PC-3 (cell line): ENCODE measurements at regions of chr2 and their contacts with region 1.

Region 1: DNA sequence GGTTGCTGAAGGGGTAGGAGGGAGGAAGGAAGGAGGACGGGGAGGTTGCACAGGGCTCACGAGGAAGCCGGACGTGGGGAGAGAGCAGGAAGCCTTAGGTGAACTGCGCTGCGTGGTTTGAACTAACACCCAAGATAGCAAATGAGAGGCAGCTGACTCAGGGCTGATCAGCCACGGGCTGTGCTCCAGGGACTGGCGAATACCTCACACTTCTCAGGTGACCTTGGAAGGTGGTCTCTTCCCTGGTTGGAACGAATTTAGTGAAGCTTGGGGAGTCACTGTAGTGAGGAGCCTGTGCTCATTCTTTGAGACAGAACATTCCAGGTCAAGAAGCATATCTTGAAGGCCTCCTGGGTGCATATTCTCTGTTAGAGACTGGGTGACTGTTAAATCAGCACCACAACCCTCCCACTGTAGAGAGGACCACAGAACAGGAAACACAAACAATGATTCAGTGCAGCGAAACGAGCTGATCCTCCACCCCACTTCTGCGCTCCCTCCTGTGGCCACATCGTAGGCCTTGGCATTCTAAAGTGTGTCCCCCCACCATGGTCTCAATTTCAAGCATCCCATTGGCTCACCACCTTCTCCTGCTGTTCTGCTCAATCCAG is 33.8 kb downstream of the TOGARAM2 start:
- DNase-seq: peak; percentile 72
- ATAC-seq: peak; percentile 89
- H3K4me3 ChIP-seq: no peak overlapping the region
- H3K27ac ChIP-seq: peak overlapping the region; percentile 23; the same call in 1 of the 2 replicates
- H3K4me1 ChIP-seq: peaks cover 15% of the 10 kb centered on the region
- H3K27me3 ChIP-seq: no peaks in the 10 kb centered on the region
- CTCF ChIP-seq: peak; percentile 46

Region 2: DNA sequence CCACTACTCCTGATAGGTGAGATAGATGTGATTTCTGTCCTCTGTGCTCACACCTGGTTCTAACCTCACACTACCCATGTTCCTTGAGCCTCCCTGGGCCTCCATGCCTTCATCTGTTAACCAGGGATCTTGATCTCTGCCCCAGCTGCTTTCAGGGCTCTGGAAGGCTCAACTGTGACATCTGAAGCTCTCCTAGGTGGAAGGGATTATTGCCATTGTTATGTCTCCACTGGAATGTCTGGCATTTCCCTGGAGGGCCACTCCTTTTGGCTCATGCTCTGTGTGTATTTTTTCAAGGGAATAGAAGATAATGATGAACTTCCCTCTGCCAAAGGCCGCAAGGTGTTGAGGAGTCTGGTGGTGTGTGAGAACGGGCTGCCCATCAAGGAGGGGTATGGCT is 18.3 kb after region 1 on chr2:
- CTCF ChIA-PET with region 1: no interaction called
- POLR2A ChIA-PET with region 1: interaction called, 17 read pairs
- intact Hi-C with region 1: no loop called
- DNase-seq: peak; percentile 72
- ATAC-seq: peak; percentile 96
- H3K4me3 ChIP-seq: no peak overlapping the region
- H3K27ac ChIP-seq: no peak overlapping the region
- H3K4me1 ChIP-seq: peaks cover 10% of the 10 kb centered on the region; the same call in 1 of the 2 replicates
- H3K27me3 ChIP-seq: no peaks in the 10 kb centered on the region
- CTCF ChIP-seq: no peak

Region 3: DNA sequence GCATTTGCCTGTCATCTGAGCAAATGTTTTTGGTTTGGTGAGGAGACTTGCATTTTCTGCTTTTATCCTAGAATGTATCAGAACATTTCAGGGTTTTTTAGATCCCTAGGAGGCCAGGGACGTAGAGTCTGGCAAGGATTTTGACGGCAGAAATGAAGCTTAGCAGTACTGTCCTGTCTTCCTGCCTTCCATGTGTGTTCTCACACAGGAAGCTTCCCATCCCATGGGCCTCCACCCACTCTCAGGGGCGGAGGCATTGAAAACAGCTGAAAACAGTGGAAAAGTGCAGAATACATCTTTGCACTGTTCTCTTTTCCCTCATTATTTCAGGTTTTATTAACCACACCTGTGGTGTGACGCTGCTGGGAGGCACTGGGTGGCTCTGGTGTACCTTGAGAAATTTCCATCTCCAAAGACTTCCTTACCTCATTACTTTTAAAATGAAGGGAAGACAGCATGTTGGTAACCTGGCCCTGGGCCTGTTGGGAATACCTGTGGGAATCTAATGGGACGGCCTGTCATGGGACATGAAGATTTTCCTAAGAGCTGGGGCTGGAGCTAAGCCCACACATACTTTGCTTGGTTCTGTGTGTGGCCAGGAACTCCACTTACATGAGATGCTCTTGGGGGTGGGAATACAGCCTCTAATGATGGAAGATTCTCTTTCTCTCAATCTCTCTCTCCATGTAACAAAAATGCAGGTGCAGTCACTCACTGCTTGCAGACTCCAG is 38.9 kb after region 1 on chr2:
- CTCF ChIA-PET with region 1: no interaction called
- POLR2A ChIA-PET with region 1: no interaction called
- intact Hi-C with region 1: no loop called
- DNase-seq: peak; percentile 43
- ATAC-seq: peak; percentile 85
- H3K4me3 ChIP-seq: no peak overlapping the region
- H3K27ac ChIP-seq: no peak overlapping the region
- H3K4me1 ChIP-seq: peaks cover 12% of the 10 kb centered on the region
- H3K27me3 ChIP-seq: no peaks in the 10 kb centered on the region
- CTCF ChIP-seq: peak; percentile 61